GM10248 (cell line): ENCODE measurements at regions of chr18 and their contacts with region 1.

Region 1: GRCh38 chr18:830315-830901 is 18.4 kb upstream of the YES1 start:
- DNase-seq: peak; percentile 35
- CTCF ChIP-seq: no peak

Region 2: DNA sequence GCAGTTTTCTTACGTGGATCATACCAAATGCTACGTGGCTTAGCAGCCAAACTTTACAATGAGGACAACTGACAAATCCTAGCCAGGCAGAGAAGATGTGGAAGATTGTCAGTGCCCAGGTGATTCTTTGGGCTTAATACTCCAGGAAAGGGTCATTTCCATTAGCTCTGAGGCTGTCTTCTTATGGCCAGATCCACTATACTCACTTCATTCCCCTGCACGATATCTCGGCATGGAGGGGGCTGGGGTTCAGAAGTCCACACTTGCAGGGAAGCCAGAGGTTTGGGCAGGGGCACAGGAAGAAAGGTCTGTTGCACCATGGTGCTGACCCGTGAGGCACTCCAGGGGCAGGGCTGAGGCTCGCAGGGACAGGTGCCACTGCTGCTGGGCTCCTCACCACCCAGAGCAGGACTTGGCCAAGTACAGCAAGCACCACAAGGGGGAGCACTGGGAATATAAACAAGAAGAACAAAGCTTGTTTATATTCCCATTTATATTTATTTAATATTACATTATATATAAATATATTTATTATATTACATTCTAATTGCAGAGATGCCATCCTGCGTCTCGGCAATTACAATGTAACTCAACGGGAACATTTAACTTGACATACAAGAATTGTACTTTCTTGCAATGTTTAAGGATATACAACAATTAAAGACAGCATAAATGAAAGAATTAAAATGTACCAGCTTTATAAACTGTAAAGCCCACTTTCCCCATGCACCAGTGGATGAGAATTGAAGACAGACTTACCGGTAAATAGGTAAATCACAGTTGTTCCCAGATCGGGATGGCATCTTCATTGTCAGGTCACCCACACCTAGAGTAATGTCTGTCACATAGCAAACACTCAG is 206.4 kb before region 1 on chr18:
- CTCF ChIA-PET with region 1: interaction called, 229 read pairs
- POLR2A ChIA-PET with region 1: no interaction called
- DNase-seq: peak; percentile 55
- CTCF ChIP-seq: peak; percentile 73

Region 3: DNA sequence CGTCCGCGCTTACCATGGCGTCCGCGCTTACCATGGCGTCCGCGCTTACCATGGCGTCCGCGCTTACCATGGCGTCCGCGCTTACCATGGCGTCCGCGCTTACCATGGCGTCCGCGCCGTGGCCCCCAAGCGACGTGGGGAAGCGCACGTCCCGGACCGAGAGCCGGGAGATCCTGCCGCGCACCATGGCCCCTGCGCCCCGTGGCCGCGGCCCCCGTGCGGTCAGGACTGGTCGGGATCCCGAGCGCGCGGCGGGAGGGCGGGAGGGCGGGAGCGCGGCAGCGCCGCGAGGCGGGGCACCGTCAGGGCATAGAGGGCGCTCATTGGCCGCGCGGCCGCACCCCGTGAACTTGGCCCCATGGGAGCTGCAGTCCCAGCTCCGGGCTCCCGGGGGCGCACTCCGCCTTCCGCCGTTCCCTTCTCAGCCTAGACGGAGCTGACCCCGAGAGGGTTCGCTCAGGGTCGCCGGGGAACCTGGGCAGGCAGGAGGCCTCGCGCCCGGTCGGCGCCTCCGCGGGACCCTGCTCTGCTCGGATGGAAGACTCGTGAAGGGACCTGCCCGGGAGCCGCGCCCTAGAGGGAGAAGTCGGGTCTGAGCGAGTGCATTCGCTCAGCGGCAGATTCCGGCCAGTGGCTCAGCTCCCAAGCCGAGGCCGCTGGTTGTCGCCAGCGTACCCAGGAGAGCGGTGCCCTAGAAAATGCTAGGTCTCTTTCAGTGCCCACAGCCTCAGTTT is 117.8 kb before region 1 on chr18 and contains the start of gene ENOSF1:
- CTCF ChIA-PET with region 1: interaction called, 25 read pairs
- POLR2A ChIA-PET with region 1: no interaction called
- DNase-seq: peak; percentile 93
- CTCF ChIP-seq: peak; percentile 83

Region 4: GRCh38 chr18:765764-766549 is 64.5 kb before region 1 on chr18:
- CTCF ChIA-PET with region 1: interaction called, 12 read pairs
- POLR2A ChIA-PET with region 1: no interaction called
- DNase-seq: no peak
- CTCF ChIP-seq: no peak

Region 5: GRCh38 chr18:801137-801536 is 29.3 kb before region 1 on chr18:
- CTCF ChIA-PET with region 1: interaction called, 37 read pairs
- POLR2A ChIA-PET with region 1: no interaction called
- DNase-seq: no peak
- CTCF ChIP-seq: no peak

Region 6: GRCh38 chr18:857986-858385 is 27.6 kb after region 1 on chr18:
- CTCF ChIA-PET with region 1: interaction called, 10 read pairs
- POLR2A ChIA-PET with region 1: no interaction called
- DNase-seq: no peak
- CTCF ChIP-seq: no peak

Region 7: GRCh38 chr18:903701-904100 is 73.3 kb after region 1 on chr18:
- CTCF ChIA-PET with region 1: no interaction called
- POLR2A ChIA-PET with region 1: no interaction called
- DNase-seq: no peak
- CTCF ChIP-seq: no peak